OCI-LY7 (cell line): ENCODE measurements at regions of chr18 and their contacts with region 1.

Region 1: GRCh38 chr18:74342416-74343043 is 26.9 kb downstream of the C18orf63 start:
- DNase-seq: peak; percentile 19
- H3K4me3 ChIP-seq: no peak overlapping the region
- H3K27ac ChIP-seq: no peak overlapping the region
- H3K4me1 ChIP-seq: no peaks in the 10 kb centered on the region
- CTCF ChIP-seq: peak; percentile 70

Region 2: GRCh38 chr18:74196220-74197119 is 146.1 kb before region 1 on chr18:
- CTCF ChIA-PET with region 1: no interaction called
- POLR2A ChIA-PET with region 1: interaction called, 4 read pairs
- intact Hi-C with region 1: loop called (anchors 1 kb)
- DNase-seq: peak; percentile 64
- H3K4me3 ChIP-seq: peak overlapping the region; percentile 50
- H3K27ac ChIP-seq: no peak overlapping the region
- H3K4me1 ChIP-seq: peaks cover 14% of the 10 kb centered on the region
- CTCF ChIP-seq: peak; percentile 88

Region 3: GRCh38 chr18:74722237-74722636 is 379.7 kb after region 1 on chr18:
- CTCF ChIA-PET with region 1: no interaction called
- POLR2A ChIA-PET with region 1: no interaction called
- intact Hi-C with region 1: no loop called
- DNase-seq: no peak
- H3K4me3 ChIP-seq: no peak overlapping the region
- H3K27ac ChIP-seq: no peak overlapping the region
- H3K4me1 ChIP-seq: peaks cover 6% of the 10 kb centered on the region
- CTCF ChIP-seq: no peak